IMR-90 (cell line): ENCODE measurements at regions of chr14 and their contacts with region 1.

Region 1: GRCh38 chr14:37116933-37117849 is 55.2 kb downstream of the SLC25A21 start:
- DNase-seq: peak; percentile 60
- ATAC-seq: peak; percentile 52
- H3K4me3 ChIP-seq: no peak overlapping the region
- H3K27ac ChIP-seq: no peak overlapping the region
- H3K4me1 ChIP-seq: peaks cover 2% of the 10 kb centered on the region; the same call in 1 of the 2 replicates
- H3K27me3 ChIP-seq: no peaks in the 10 kb centered on the region
- CTCF ChIP-seq: peak; percentile 68
- POLR2A ChIP-seq: no peak
- RAD21 ChIP-seq: peak; percentile 72

Region 2: DNA sequence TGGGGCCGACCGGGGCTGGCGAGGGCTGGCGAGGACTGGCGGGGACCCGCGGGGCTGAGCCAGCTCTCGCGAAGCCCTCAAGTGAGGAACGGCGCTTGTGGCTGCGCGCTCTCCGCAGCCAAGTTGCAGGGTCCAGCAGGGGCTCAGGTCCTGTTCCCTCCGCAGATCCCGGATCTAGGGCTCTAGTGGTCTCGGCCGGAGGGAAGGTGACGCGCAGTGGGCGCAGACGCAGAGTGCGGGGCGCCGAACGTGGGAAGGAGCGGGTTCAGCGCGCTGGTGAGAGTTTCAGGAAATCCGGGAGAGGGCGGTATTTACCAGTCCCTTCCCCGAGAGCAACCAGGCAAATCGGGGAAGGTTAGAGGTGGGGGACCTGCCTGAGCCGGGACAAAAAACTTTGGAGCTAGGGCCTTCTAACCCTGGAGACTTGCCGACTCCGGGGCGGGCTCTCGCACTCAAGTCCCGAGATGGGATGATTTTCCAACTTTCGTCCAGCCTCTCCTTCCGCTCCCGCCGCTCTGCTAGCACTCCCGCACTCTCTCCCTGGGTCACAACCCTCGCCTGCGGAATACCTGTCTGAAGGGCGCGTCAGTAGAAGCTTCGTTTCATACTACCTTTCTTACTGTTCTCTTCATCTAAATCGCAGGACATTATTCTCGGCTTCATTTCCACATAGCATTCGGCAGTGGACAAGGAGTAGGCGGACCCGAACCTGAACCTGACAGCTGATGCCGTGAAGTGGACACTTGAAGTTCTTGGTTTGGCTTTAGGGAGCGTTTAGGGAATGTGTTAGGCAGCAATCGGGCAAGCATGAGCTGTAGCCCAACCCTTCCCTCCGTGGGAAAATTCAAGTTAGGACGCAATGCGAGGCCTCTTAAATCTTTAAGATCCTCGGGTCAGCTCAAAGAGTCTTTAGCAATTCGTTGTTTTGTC is 469.1 kb before region 1 on chr14:
- CTCF ChIA-PET with region 1: interaction called, 10 read pairs
- POLR2A ChIA-PET with region 1: no interaction called
- dilution Hi-C with region 1: no loop called
- in situ Hi-C with region 1: no loop called
- intact Hi-C with region 1: loop called (anchors 1 kb)
- DNase-seq: peak; percentile 30
- ATAC-seq: peak; percentile 91
- H3K4me3 ChIP-seq: peak overlapping the region; percentile 42
- H3K27ac ChIP-seq: no peak overlapping the region
- H3K4me1 ChIP-seq: 0 out of 2 replicates have a peak, but pooled peaks cover 4% of the 10 kb centered on the region
- H3K27me3 ChIP-seq: peaks cover 58% of the 10 kb centered on the region
- CTCF ChIP-seq: peak; percentile 60
- POLR2A ChIP-seq: no peak
- RAD21 ChIP-seq: peak; percentile 60

Region 3: DNA sequence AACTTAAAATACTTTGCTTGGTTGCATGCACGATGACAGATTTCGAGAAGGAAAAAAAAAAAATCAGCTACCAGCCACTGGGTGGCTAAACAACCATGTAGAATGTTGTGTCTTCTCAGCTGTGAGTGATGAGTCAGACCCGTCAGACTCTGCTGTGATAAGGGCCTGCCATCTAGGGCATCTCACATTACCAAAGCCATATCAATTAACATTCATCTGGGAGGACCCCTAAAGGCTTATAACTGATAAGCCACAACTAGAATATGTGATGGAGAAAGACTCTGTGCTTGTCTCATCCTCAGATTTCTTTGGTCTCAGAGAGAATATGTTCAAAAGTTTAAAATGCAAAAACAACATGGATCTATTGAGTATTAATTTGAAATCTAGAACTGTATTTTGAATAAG is 344.1 kb before region 1 on chr14:
- CTCF ChIA-PET with region 1: no interaction called
- POLR2A ChIA-PET with region 1: no interaction called
- dilution Hi-C with region 1: no loop called
- in situ Hi-C with region 1: no loop called
- intact Hi-C with region 1: loop called (anchors 10 kb)
- DNase-seq: peak; percentile 15
- ATAC-seq: 0 out of 2 replicates have a peak, but pooled peaks have one; percentile 32
- H3K4me3 ChIP-seq: no peak overlapping the region
- H3K27ac ChIP-seq: no peak overlapping the region
- H3K4me1 ChIP-seq: no peaks in the 10 kb centered on the region
- H3K27me3 ChIP-seq: no peaks in the 10 kb centered on the region
- CTCF ChIP-seq: no peak
- POLR2A ChIP-seq: no peak
- RAD21 ChIP-seq: no peak

Region 4: GRCh38 chr14:36866867-36867266 is 250.3 kb before region 1 on chr14:
- CTCF ChIA-PET with region 1: no interaction called
- POLR2A ChIA-PET with region 1: no interaction called
- dilution Hi-C with region 1: no loop called
- in situ Hi-C with region 1: no loop called
- intact Hi-C with region 1: loop called (anchors 10 kb)
- DNase-seq: no peak
- ATAC-seq: no peak
- H3K4me3 ChIP-seq: no peak overlapping the region
- H3K27ac ChIP-seq: no peak overlapping the region
- H3K4me1 ChIP-seq: no peaks in the 10 kb centered on the region
- H3K27me3 ChIP-seq: no peaks in the 10 kb centered on the region; the same call in none of the 2 replicates
- CTCF ChIP-seq: no peak
- POLR2A ChIP-seq: no peak
- RAD21 ChIP-seq: no peak